H1 (cell line): ENCODE measurements at regions of chr20 and their contacts with region 1.

Region 1: DNA sequence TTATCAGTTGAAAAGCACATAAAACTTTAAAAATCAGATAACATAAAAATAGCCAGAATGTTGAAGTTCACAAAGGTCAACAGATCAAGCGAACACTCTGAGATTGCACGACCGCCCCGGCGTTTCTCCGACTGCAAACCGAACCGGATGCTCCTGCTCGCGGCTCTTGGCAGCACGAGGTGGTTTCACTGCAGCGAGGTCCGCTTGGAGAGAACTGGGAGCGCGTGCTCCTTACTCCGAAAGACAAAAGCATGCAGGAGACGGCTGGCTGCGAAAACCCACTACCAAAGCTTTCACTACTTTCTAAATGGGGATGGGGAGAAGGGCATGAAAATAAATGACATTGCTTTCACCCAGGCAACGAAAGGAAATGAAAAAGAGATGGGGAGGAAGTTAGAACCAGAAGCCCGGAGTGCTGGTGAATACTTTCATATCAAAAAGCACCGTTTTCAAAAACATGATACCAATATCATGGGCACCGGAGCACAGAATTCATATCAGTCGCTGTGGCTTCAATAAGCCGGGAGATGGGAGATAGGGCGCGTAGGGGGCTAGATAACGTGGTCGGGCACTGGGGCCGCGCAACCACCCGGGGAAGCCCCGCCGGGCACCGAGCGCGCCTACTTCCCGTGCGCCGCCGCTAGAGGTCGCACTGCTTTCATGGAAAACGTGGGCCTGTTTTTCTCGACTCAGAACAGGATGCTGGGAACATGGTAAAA is 8.3 kb upstream of the ANKRD60 start:
- DNase-seq: peak; percentile 34 to 97
- H3K4me3 ChIP-seq: peak overlapping the region; percentile 29 to 60 (median 44); a peak in 7 of 8 replicates
- H3K27ac ChIP-seq: no peak overlapping the region
- H3K4me1 ChIP-seq: no peaks in the 10 kb centered on the region; a peak in 1 of 7 replicates
- H3K27me3 ChIP-seq: no peaks in the 10 kb centered on the region; a peak in 1 of 7 replicates
- CTCF ChIP-seq: peak; percentile 88 to 97 (median 90)
- EP300 ChIP-seq: no peak
- POLR2A ChIP-seq: no peak; a peak in 1 of 3 replicates
- RAD21 ChIP-seq: peak; percentile 88 to 90

Region 2: DNA sequence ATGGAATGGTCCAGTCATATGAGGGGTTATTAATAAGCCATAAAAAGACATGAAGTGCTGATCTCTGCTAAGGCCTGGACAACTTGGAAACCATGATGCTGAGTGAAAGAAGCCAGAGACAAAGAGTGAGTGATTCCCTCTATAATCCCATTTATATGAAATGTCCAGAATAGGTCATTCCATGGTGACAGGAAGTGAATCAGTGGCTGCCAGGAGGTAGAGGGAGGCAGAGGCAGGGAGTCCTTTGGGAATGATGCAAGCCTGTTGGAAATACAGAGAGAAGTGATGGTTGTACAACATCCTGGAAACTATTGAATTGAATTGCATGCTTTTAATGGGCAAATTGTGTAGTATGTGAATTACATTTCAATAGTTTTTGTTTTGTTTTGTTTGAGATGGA is 34.7 kb before region 1 on chr20:
- CTCF ChIA-PET with region 1: no interaction called
- POLR2A ChIA-PET with region 1: no interaction called
- DNase-seq: no peak
- H3K4me3 ChIP-seq: no peak overlapping the region
- H3K27ac ChIP-seq: no peak overlapping the region
- H3K4me1 ChIP-seq: no peaks in the 10 kb centered on the region
- H3K27me3 ChIP-seq: no peaks in the 10 kb centered on the region
- CTCF ChIP-seq: no peak
- EP300 ChIP-seq: no peak
- POLR2A ChIP-seq: no peak
- RAD21 ChIP-seq: no peak

Region 3: DNA sequence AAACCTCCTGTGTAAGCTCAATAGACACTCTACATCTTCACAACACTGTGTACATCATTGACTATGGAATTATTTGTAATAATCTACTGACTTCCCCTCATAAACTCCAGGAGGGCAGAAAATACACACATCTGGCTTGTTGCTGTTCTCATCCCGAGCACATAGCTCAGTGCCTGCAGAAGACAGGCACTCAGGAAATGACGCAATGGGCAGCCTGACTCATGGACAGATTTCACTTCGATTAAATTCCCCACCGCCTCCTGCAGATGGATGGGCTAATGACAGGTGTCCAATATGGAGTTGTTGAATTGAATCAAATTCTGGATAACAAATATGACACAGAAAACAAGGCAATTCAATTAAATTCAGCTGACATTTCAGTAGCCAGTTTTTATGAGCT is 17.5 kb before region 1 on chr20:
- CTCF ChIA-PET with region 1: interaction called, 21 read pairs
- POLR2A ChIA-PET with region 1: no interaction called
- DNase-seq: no peak
- H3K4me3 ChIP-seq: no peak overlapping the region
- H3K27ac ChIP-seq: no peak overlapping the region
- H3K4me1 ChIP-seq: no peaks in the 10 kb centered on the region
- H3K27me3 ChIP-seq: no peaks in the 10 kb centered on the region; a peak in 2 of 7 replicates
- CTCF ChIP-seq: no peak
- EP300 ChIP-seq: no peak
- POLR2A ChIP-seq: no peak
- RAD21 ChIP-seq: no peak

Region 4: DNA sequence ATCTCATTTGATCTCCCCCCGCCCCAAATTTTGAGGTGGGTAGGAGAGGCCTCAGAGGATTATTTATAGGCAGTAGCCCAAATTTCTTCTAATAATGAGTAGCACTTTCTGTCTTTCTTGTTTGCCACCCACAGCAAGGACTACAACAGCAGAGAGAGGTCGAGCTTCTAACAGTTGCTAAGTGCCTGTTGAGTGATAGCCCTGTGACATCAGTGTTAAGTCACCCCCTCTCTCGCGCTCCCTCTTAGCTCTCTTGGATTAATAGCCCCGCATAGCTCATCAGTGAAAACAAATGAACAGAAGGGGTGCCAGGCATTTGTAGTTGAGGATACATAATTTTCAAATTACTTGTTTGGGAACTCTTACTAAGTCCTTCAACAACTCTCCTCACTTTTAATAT is 11.8 kb before region 1 on chr20:
- CTCF ChIA-PET with region 1: interaction called, 21 read pairs
- POLR2A ChIA-PET with region 1: interaction called, 3 read pairs
- DNase-seq: no peak
- H3K4me3 ChIP-seq: no peak overlapping the region
- H3K27ac ChIP-seq: no peak overlapping the region
- H3K4me1 ChIP-seq: peaks cover 0 to 4% (median 1%) of the 10 kb centered on the region in 4 experiments; a peak in 2 of 7 replicates
- H3K27me3 ChIP-seq: peaks cover 1 to 19% (median 16%) of the 10 kb centered on the region in 4 experiments
- CTCF ChIP-seq: no peak
- EP300 ChIP-seq: no peak
- POLR2A ChIP-seq: no peak
- RAD21 ChIP-seq: no peak

Region 5: DNA sequence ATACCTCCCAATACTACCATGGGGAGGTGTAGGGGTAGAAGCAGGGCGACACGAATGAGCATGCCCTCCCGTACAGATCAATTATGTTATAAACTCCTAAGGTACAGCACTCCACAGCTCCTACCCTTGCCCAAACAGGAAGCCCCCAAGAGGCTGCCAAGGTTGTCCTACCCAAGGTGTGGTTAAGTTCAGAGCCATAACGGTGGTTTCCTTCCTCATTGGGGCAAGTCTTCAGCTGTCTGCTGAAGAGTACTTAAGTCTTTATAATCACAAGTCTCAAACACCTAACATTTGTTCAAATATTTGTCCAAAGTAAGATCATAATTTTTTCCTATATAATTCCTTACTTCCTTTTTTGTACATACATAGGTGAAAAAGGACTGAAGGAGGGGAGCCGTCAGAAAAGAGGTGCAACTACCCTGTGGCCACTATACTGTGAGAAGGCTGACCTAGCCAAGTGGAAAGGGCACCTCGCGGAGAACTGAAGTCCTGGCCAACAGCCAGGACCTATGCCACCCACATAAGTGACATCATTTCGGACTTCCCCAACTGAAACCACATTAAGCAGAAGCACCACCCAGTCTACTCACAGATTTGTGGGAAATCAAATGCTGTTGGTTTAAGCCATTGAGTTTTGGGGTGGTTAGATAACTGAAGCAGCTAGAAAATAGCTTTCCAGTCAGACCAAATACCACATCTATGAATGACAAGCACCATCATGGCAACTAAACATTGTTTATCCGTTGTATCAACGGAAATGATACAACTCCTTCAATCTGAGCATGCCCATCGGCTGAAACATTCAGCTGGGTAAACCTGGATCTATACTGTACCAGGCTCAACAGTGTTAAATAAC is 69.9 kb after region 1 on chr20:
- CTCF ChIA-PET with region 1: interaction called, 11 read pairs
- POLR2A ChIA-PET with region 1: no interaction called
- DNase-seq: no peak
- H3K4me3 ChIP-seq: no peak overlapping the region
- H3K27ac ChIP-seq: no peak overlapping the region
- H3K4me1 ChIP-seq: peaks cover 0 to 3% (median 0%) of the 10 kb centered on the region in 4 experiments; a peak in 2 of 7 replicates
- H3K27me3 ChIP-seq: no peaks in the 10 kb centered on the region
- CTCF ChIP-seq: no peak
- EP300 ChIP-seq: no peak
- POLR2A ChIP-seq: no peak
- RAD21 ChIP-seq: no peak